Common myeloid progenitor, CD34-positive (primary cell): ENCODE measurements at regions of chr1 and their contacts with region 1.

Region 1: GRCh38 chr1:207050768-207051614 is at the start of gene YOD1:
- DNase-seq: peak; percentile 92 to 96 (median 94)
- H3K4me3 ChIP-seq: peak within 1 kb of the TSS; percentile 83 to 100 (median 99)
- H3K27ac ChIP-seq: peak within 1 kb of the TSS; percentile 93 to 97
- H3K4me1 ChIP-seq: peaks cover 22 to 48% (median 36%) of the 10 kb centered on the region in 4 experiments
- H3K27me3 ChIP-seq: no peaks in the 10 kb centered on the region

Region 2: GRCh38 chr1:206713070-206713469 is 337.9 kb before region 1 on chr1:
- CTCF ChIA-PET with region 1: no interaction called
- POLR2A ChIA-PET with region 1: no interaction called
- DNase-seq: no peak
- H3K4me3 ChIP-seq: no peak overlapping the region
- H3K27ac ChIP-seq: no peak overlapping the region
- H3K4me1 ChIP-seq: peaks cover 27 to 60% (median 36%) of the 10 kb centered on the region in 4 experiments
- H3K27me3 ChIP-seq: no peaks in the 10 kb centered on the region

Region 3: DNA sequence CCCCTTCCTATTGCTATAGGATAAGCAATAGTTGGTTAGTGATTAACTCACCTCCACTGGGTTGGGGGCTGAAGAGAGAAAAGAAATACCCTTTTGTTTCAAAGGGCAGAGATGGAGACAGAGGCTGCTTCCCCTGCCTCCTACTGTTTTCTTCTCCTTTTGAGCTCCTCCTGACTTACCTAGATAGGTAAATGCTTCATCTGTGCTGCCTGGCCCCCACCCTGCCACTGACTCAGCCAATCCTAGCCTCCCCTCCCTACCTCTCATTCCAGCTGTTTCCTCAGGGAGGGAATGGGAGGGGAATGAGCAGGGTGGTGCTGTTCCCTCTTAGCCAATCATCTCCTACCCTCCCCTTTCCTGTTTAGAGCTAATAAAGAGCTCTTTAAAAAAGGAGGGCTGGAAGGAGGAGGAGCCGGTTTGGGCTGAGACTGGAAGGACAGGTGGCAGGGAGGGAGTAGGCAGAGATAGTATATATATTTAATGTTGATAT is 18.4 kb before region 1 on chr1 and contains the start of gene C1orf116:
- CTCF ChIA-PET with region 1: interaction called, 60 read pairs
- POLR2A ChIA-PET with region 1: no interaction called
- DNase-seq: no peak
- H3K4me3 ChIP-seq: no peak within 1 kb of the TSS
- H3K27ac ChIP-seq: peak within 1 kb of the TSS in 1 of 2 experiments; percentile 1
- H3K4me1 ChIP-seq: peaks cover 0 to 10% (median 5%) of the 10 kb centered on the region in 4 experiments
- H3K27me3 ChIP-seq: peaks cover 0 to 3% (median 0%) of the 10 kb centered on the region in 5 experiments

Region 4: GRCh38 chr1:207069858-207070506 is 19.0 kb after region 1 on chr1:
- CTCF ChIA-PET with region 1: interaction called, 18 read pairs
- POLR2A ChIA-PET with region 1: interaction called, 4 read pairs
- DNase-seq: peak in 2 of 3 donors; percentile 39 to 53
- H3K4me3 ChIP-seq: no peak overlapping the region
- H3K27ac ChIP-seq: peak overlapping the region in 1 of 2 experiments; percentile 21
- H3K4me1 ChIP-seq: peaks cover 20 to 51% (median 41%) of the 10 kb centered on the region in 4 experiments
- H3K27me3 ChIP-seq: no peaks in the 10 kb centered on the region

Region 5: GRCh38 chr1:207077470-207078377 is 26.7 kb after region 1 on chr1:
- CTCF ChIA-PET with region 1: interaction called, 22 read pairs
- POLR2A ChIA-PET with region 1: interaction called, 3 read pairs
- DNase-seq: peak; percentile 77 to 90 (median 83)
- H3K4me3 ChIP-seq: no peak overlapping the region
- H3K27ac ChIP-seq: no peak overlapping the region
- H3K4me1 ChIP-seq: peaks cover under 1 to 4% (median 2%) of the 10 kb centered on the region in 4 experiments
- H3K27me3 ChIP-seq: no peaks in the 10 kb centered on the region